ENCODE measurements at regions of chr2 and their contacts with region 1.

Region 1: GRCh38 chr2:186589612-186590349 is at the start of gene ITGAV:
- DNase-seq: peak; percentile 81
- ATAC-seq: peak; percentile 95
- H3K4me3 Mint-ChIP-seq: peak within 1 kb of the TSS; percentile 87
- H3K27ac Mint-ChIP-seq: peak within 1 kb of the TSS; percentile 83
- H3K4me1 Mint-ChIP-seq: peaks cover 20% of the 10 kb centered on the region
- H3K27me3 Mint-ChIP-seq: no peaks in the 10 kb centered on the region
- total RNA-seq, gene ITGAV: 7.5 to 7.7 TPM

Region 2: DNA sequence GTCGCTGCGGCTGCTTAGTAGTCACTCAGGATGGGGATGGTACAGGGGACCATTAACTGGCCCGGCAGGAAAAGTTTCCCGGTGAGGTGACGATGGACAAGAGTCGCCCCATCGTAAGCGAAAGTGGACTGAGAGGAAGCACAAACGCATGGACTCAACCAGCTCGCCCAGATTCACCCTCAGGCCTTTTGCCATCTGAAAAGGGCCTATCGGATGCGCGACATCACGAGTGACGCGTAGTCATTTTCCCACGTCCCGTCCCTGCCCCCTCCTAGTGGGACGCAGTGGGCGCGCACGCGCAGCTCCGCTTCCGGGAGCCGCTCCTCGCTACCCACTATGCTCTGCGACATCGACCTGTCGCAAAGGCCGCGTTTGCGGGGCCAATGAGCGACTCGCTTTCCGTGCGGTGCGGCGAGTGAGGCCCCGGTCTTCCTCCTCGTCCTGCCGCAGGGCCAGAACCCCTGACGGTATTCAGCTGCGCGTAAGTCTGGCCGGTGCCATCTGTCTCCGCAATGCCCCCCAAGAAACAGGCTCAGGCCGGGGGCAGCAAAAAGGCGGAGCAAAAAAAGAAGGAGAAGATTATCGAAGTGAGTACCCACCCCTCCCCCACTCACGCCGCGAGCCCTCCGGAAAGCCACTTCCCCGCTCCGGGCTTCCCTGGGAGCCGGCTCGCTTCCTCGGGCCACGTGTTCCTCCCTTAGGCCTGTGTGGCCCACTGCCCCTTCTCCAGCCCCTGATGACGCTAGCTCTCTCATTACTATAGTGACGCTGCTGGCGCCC is 103.7 kb before region 1 on chr2 and contains the start of gene ZC3H15:
- POLR2A ChIA-PET with region 1: interaction called, 19 read pairs
- DNase-seq: peak; percentile 95
- ATAC-seq: peak; percentile 92
- H3K4me3 Mint-ChIP-seq: peak within 1 kb of the TSS; percentile 97
- H3K27ac Mint-ChIP-seq: peak within 1 kb of the TSS; percentile 97
- H3K4me1 Mint-ChIP-seq: peaks cover 41% of the 10 kb centered on the region
- H3K27me3 Mint-ChIP-seq: no peaks in the 10 kb centered on the region
- total RNA-seq, gene ZC3H15: 58.7 to 64.7 TPM

Region 3: DNA sequence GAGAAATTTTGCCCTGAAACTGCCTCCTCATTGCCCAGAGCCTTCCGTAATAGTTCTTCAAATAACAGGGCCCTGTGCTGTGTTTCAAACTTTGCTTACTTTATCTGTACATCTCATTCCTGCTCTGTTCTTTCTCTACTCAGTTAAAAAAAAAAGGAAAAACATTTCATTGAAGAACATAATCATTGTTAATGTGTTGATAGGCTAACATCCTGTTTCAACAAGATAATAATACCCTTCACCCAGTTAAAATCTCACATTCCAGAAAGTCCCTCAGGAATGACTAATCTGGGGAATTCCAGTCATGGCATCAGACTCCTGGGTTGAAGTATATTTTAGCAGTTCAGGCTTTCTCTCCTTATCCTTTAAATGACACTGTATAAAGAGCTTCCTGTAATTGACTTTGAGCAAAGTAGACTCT is 45.5 kb before region 1 on chr2:
- POLR2A ChIA-PET with region 1: no interaction called
- DNase-seq: no peak
- ATAC-seq: no peak
- H3K4me3 Mint-ChIP-seq: no peak overlapping the region
- H3K27ac Mint-ChIP-seq: no peak overlapping the region
- H3K4me1 Mint-ChIP-seq: no peaks in the 10 kb centered on the region
- H3K27me3 Mint-ChIP-seq: peaks cover 2% of the 10 kb centered on the region

Region 4: DNA sequence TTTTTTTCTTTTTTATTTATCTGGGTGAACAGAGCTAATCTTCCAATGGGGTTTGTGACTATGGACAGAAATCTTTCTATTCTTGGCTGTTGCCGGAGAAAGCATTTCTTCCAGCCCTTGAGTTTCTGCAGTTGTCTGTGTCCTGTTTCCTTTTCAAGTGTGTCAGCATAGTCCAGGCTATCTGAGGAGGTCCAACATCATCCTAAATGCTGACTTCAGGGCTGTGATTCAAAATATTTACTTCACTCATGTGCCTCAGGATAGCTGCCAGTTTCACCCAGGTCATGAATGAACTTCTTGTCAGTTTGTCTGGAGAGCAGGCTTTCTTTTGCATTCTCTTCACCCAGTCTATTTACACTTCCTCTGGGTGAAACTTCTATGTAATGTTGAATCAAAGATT is 28.0 kb after region 1 on chr2:
- POLR2A ChIA-PET with region 1: no interaction called
- DNase-seq: no peak
- ATAC-seq: no peak
- H3K4me3 Mint-ChIP-seq: no peak overlapping the region
- H3K27ac Mint-ChIP-seq: no peak overlapping the region
- H3K4me1 Mint-ChIP-seq: peaks cover 2% of the 10 kb centered on the region
- H3K27me3 Mint-ChIP-seq: no peaks in the 10 kb centered on the region

Region 5: DNA sequence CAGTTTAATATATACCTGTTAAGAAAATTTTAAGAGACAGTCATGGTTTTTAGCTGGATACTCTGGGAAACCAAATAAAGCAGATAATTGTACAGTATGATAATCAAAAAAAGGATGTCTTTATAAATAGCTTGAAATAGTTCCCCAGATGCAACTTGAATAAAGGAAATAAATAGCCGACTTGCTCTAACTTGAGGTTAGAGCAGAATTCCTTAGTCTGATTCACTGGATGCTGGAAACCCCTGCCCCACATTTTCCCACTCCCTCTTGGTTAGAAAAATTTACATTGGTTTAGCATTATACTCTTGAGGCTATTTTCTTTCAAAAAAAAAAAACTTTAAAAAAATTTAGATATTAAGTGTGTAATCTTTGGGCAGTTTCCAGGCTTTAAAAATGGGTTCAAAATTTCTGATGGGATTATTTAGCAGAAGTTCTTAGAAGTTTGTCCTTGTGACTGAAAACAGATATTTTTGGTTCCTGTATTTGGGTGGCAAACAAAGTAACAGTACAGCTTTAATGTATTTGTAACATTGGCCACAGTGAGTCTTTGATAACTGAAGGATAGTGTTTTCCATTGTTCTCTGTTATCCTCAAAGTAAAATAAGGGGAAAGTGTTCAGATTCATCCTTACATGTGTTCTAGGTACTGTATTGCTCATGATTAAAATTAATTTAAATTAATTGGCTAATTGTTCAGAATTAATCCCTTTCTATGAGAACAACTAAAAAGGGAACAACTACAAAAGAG is 39.6 kb after region 1 on chr2:
- POLR2A ChIA-PET with region 1: no interaction called
- DNase-seq: no peak
- ATAC-seq: no peak
- H3K4me3 Mint-ChIP-seq: no peak overlapping the region
- H3K27ac Mint-ChIP-seq: no peak overlapping the region
- H3K4me1 Mint-ChIP-seq: no peaks in the 10 kb centered on the region
- H3K27me3 Mint-ChIP-seq: no peaks in the 10 kb centered on the region

Measured in activated naive CD8-positive, alpha-beta T cell treated with anti-CD3 and anti-CD28 coated beads, Interleukin-2, amount 10 ng/mL, durations not matched to agents 7 days and 5 days (primary cell).